Activated T-helper 2 cell treated with anti-CD3 and anti-CD28 coated beads, Interferon-gamma antibody, Interleukin-2, Interleukin-4, amounts not matched to agents 10 μg/mL and 5 μg/mL and 100 μg/mL, durations not matched to agents 14 hours and 24 hours and 36 hours (primary cell): ENCODE measurements at regions of chr6 and their contacts with region 1.

Region 1: DNA sequence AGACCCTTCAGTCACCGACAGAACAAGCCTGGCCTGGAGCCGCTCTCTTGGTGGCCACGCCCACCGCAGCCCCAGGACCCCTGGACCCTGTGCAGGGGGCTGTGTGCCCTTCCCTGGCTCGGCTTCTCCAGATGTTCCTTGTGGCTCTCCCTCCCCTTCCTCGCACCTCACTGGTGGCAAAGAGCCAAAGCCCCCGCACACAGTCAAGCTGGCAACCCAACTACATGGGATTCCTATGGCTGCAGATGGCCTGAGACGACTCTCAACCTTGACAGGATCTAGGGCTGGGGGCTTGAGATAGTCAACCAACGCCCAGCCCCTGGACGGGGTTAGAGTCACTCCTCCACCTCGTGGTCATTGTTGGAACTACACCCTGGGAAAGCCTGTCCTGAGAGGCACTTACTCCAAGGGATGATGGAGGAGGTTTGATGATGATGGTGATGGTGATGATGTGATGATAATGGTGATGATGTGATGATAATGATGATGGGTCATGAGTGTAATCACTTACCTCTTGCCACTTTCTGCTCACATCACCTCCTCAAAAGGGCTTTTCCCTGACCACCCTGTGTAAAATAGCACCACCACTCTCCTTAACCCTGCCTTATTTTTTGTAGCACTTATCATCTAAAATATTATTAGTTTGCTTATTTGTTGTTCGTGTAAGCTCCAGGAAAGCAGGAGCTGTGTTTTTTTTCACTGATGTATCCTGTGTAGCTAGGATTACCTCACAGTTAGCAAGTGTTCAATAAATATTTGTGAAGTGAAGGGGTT is 278.4 kb downstream of the LRFN2 start:
- DNase-seq: peak; percentile 50
- H3K4me3 Mint-ChIP-seq: no peak overlapping the region
- H3K27ac Mint-ChIP-seq: no peak overlapping the region
- H3K4me1 Mint-ChIP-seq: peaks cover 2% of the 10 kb centered on the region
- H3K27me3 Mint-ChIP-seq: peaks cover 38% of the 10 kb centered on the region

Region 2: DNA sequence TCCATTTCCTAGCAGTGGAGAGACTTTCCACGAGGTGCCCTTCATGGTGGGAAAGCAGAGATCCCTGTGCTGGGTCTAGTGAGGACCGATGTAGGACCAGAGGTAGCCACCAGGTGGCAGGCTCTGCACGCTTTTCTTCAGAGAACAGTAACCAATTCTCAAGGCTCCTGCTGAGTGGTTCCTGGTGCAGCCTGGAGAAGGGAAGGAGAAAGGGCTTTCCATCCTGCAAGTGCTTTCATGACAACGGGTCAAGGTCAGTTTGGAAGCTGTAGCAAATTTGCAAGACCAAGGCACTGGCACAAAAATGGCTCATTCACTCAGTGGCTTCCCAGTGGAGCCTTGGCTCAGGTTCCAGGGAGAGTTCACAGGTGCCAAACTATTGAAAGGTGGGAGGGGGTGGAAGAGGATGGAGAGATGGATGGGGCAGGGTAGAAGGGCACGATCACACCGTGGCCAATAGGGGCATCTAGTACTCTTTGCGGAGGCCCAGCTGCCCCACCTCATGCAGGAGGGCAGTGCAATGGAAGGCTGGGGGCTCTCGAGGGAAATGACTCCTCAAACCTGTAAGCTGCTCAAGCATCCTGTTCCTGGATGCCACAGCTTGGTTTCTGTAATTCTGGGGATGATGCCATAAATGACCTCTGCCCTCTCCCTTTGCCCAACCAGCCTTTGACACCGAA is 960.7 kb before region 1 on chr6:
- intact Hi-C with region 1: loop called (anchors 10 kb)
- DNase-seq: peak; percentile 43
- H3K4me3 Mint-ChIP-seq: no peak overlapping the region
- H3K27ac Mint-ChIP-seq: no peak overlapping the region
- H3K4me1 Mint-ChIP-seq: no peaks in the 10 kb centered on the region
- H3K27me3 Mint-ChIP-seq: no peaks in the 10 kb centered on the region

Region 3: DNA sequence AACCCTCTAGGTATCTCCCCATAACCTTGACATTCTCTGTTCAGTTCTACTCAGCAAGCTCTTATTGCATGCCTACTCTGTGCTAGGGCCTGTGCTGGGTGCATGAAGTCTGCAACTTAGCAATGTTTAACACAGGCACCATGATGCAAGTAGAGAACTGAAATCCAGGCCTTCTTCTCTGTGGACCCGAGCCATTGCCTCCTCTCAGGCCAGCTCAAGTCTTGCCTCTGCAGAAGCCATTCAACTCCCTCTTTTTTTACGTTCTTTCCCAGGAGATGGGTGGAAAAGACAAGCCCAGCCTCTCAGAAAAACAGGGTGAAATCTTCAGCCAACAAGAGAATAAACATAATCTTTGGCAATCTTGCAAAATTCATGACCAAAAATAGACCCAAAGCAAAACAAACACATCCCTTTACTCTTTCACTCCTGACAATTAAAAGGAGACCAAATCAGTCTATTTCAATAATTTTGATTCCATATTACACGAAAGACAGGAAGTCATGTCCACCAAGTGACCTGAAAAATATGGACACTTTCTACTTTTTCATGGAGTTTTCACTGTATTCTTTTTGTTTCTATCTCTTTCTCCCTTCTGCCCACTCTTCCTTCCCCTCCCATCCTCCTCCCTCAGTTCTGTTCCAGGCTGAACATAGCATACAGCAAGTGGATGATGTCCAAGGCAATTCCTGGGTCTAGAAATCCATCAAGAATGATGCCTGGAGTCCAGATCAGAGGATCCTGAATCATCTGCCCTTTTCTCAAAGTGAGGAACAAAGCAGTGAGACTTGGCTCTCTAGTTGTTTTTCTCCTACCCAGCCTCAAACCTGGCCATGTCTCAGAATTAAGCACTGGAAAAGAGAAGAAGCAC is 329.0 kb before region 1 on chr6:
- intact Hi-C with region 1: loop called (anchors 10 kb)
- DNase-seq: no peak
- H3K4me3 Mint-ChIP-seq: no peak overlapping the region
- H3K27ac Mint-ChIP-seq: no peak overlapping the region
- H3K4me1 Mint-ChIP-seq: no peaks in the 10 kb centered on the region
- H3K27me3 Mint-ChIP-seq: peaks cover 7% of the 10 kb centered on the region